ENCODE measurements at regions of chr17 and their contacts with region 1.

Region 1: GRCh38 chr17:20896153-20896649 is 146.6 kb downstream of the USP22 start:
- DNase-seq: peak; percentile 13
- H3K4me3 ChIP-seq: no peak overlapping the region
- H3K27ac ChIP-seq: no peak overlapping the region
- H3K4me1 ChIP-seq: no peaks in the 10 kb centered on the region
- H3K27me3 ChIP-seq: no peaks in the 10 kb centered on the region
- CTCF ChIP-seq: no peak
- EP300 ChIP-seq: no peak
- POLR2A ChIP-seq: no peak

Region 2: GRCh38 chr17:20992987-20993862 is 97.0 kb after region 1 on chr17:
- in situ Hi-C with region 1: no loop called
- intact Hi-C with region 1: loop called (anchors 5 kb)
- DNase-seq: peak; percentile 59
- H3K4me3 ChIP-seq: peak overlapping the region in 2 of 4 donors; percentile 13 to 22
- H3K27ac ChIP-seq: peak overlapping the region in 1 of 4 donors; percentile 2
- H3K4me1 ChIP-seq: peaks cover 0 to 15% (median 0%) of the 10 kb centered on the region in 4 donors
- H3K27me3 ChIP-seq: no peaks in the 10 kb centered on the region
- CTCF ChIP-seq: peak; percentile 91 to 95 (median 93)
- EP300 ChIP-seq: no peak
- POLR2A ChIP-seq: no peak

Measured in transverse colon (tissue), 4 donors.